Upper lobe of right lung (tissue), 1 donor: ENCODE measurements at regions of chr20 and their contacts with region 1.

Region 1: GRCh38 chr20:50575847-50576720 is 65.9 kb downstream of the PTPN1 start:
- DNase-seq: peak; percentile 86
- ATAC-seq: peak; percentile 83
- H3K4me3 ChIP-seq: no peak overlapping the region
- H3K27ac ChIP-seq: no peak overlapping the region
- H3K4me1 ChIP-seq: peaks cover 45% of the 10 kb centered on the region
- H3K27me3 ChIP-seq: no peaks in the 10 kb centered on the region
- CTCF ChIP-seq: peak; percentile 78

Region 2: DNA sequence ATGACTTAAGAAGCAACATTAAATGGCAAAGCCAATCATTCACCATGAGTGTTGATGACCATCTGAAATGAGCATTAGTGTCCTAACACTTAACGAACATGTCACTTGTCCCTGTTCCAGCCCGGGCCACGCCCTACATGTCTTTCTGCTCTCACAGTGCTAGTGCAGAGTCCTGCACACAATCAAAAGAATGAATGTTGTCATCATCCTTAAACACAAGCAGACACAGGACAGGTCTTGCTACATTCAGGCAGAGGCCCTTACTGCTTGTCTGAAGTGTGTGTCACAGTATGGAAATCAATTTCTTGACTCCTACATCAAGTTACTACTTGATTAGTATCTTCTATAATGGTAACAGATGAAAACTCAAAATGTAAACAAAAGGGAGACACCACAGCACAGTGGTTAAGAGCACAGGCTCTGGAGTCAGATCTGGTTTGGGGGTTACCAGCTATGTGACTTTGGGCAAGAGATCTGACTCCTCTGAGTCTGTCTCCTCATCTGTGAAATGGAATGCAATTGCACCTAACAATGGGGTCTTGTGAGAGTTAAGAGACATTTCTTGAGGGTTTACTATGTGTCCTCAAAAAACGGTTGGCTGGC is 480.5 kb before region 1 on chr20:
- intact Hi-C with region 1: loop called (anchors 5 kb)
- DNase-seq: no peak
- ATAC-seq: peak; percentile 35
- H3K4me3 ChIP-seq: no peak overlapping the region
- H3K27ac ChIP-seq: no peak overlapping the region
- H3K4me1 ChIP-seq: peaks cover 14% of the 10 kb centered on the region
- H3K27me3 ChIP-seq: no peaks in the 10 kb centered on the region
- CTCF ChIP-seq: no peak

Region 3: DNA sequence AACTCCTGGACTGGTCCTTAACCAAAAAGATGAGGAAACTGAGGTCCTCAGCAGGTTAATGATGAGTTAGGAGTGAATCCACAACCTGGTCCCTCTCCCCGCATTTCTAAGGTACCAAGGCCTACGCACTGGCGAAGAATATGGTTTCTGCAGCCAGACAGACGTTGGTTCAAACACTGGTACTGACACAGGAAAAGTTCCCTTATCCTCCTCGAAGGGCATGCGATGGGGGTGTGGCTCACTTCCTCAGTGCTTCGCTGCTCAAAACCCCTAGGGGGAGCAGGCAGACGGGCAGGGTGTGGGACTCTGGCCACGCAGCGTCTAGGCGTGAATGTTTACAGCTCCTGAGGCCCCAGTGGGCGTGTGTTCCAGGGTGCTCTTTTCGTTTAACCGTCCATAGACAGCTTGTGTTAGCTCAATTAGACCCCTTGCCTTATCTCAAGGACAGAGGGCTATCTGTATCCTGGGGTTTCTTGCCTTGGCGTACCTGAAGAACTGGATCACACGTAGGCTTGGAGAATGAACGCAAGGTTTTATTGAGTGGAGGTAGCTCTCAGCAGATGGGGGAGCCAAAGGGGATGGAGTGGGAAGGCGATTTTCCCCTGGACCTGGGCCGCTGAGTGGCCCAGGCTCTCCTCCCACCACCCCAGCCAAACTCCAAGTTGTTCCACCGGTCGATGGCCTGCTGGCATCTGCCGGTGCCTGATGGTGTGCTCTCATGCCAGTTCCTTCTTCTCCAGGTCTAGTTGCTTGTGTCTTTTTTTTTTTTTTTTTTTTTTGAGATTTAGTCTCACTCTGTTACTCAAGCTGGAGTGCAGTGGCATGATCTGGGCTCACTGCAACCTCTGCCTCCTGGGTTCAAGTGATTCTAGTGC is 97.7 kb before region 1 on chr20:
- intact Hi-C with region 1: loop called (anchors 10 kb)
- DNase-seq: peak; percentile 89
- ATAC-seq: peak; percentile 97
- H3K4me3 ChIP-seq: no peak overlapping the region
- H3K27ac ChIP-seq: no peak overlapping the region
- H3K4me1 ChIP-seq: peaks cover 3% of the 10 kb centered on the region
- H3K27me3 ChIP-seq: no peaks in the 10 kb centered on the region
- CTCF ChIP-seq: peak; percentile 71

Region 4: GRCh38 chr20:50528804-50529351 is 47.2 kb before region 1 on chr20:
- intact Hi-C with region 1: loop called (anchors 10 kb)
- DNase-seq: no peak
- ATAC-seq: no peak
- H3K4me3 ChIP-seq: no peak overlapping the region
- H3K27ac ChIP-seq: no peak overlapping the region
- H3K4me1 ChIP-seq: peaks cover 74% of the 10 kb centered on the region
- H3K27me3 ChIP-seq: no peaks in the 10 kb centered on the region
- CTCF ChIP-seq: no peak